ENCODE measurements at regions of chr14 and their contacts with region 1.

Region 1: GRCh38 chr14:34982417-34983147 is at the start of gene SRP54:
- DNase-seq: peak; percentile 99 to 100 (median 100)
- ATAC-seq: peak; percentile 93
- H3K4me3 ChIP-seq: peak within 1 kb of the TSS; percentile 82 to 87
- H3K4me3 Mint-ChIP-seq: no peak within 1 kb of the TSS
- H3K27ac ChIP-seq: peak within 1 kb of the TSS; percentile 92 to 96
- H3K27ac Mint-ChIP-seq: no peak within 1 kb of the TSS
- H3K4me1 ChIP-seq: peaks cover 34% of the 10 kb centered on the region
- H3K4me1 Mint-ChIP-seq: peaks cover 33% of the 10 kb centered on the region
- H3K27me3 ChIP-seq: no peaks in the 10 kb centered on the region
- H3K27me3 Mint-ChIP-seq: no peaks in the 10 kb centered on the region
- CTCF ChIP-seq: no peak
- total RNA-seq, gene SRP54: 40.4 to 42.4 TPM

Region 2: DNA sequence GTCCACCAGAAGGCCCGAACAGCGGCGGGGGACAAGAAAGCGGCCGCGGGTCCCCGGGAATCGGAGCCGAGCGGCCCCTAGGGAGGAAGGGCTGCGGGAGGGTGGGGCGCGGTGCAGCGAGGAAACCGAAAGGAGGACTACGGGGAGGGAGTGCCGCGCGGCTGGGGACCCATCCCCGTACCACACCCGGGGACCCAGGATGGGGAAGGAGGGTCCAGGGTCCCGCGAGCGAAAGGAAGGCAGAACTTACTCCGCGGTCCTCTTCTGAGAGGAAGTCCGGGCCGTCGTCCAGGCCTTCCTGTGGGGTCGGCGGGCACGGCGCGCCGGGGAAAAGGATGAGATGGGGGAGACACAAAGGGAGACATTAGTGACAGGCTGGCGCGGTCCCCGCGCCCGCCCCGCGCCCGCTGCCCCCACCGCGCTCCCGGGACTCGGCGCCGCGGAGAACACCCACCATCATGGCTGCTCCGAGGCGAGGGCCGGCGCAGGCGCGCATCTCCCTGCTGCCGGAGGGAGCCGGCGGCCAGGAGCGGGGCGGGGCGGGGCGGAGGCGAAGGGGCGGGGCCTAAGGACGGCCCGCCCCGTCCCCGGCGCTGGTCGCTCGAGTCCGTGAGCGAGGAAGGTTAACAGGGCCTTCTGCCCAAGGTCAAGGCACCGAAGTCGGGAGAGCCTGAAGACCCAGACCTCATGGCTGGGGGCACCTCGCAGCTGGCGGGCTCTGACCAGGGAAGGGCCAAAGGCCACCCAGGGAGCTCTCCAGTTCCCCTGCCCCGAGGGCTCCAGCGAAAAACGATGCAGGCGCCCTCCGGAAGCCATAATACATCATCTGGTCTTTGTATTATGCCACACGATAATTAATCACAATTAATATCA is 352.7 kb before region 1 on chr14 and contains the start of gene SNX6:
- CTCF ChIA-PET with region 1: no interaction called
- POLR2A ChIA-PET with region 1: no interaction called
- intact Hi-C with region 1: loop called (anchors 1 to 5 kb)
- DNase-seq: peak; percentile 70 to 92 (median 83)
- ATAC-seq: peak; percentile 96
- H3K4me3 ChIP-seq: peak within 1 kb of the TSS; percentile 95 to 100
- H3K4me3 Mint-ChIP-seq: peak within 1 kb of the TSS; percentile 94
- H3K27ac ChIP-seq: peak within 1 kb of the TSS; percentile 91 to 96
- H3K27ac Mint-ChIP-seq: peak within 1 kb of the TSS; percentile 93
- H3K4me1 ChIP-seq: peaks cover 20% of the 10 kb centered on the region
- H3K4me1 Mint-ChIP-seq: peaks cover 37% of the 10 kb centered on the region
- H3K27me3 ChIP-seq: no peaks in the 10 kb centered on the region
- H3K27me3 Mint-ChIP-seq: peaks cover 4% of the 10 kb centered on the region
- CTCF ChIP-seq: no peak
- total RNA-seq, gene SNX6: 51.2 to 53.5 TPM

Region 3: DNA sequence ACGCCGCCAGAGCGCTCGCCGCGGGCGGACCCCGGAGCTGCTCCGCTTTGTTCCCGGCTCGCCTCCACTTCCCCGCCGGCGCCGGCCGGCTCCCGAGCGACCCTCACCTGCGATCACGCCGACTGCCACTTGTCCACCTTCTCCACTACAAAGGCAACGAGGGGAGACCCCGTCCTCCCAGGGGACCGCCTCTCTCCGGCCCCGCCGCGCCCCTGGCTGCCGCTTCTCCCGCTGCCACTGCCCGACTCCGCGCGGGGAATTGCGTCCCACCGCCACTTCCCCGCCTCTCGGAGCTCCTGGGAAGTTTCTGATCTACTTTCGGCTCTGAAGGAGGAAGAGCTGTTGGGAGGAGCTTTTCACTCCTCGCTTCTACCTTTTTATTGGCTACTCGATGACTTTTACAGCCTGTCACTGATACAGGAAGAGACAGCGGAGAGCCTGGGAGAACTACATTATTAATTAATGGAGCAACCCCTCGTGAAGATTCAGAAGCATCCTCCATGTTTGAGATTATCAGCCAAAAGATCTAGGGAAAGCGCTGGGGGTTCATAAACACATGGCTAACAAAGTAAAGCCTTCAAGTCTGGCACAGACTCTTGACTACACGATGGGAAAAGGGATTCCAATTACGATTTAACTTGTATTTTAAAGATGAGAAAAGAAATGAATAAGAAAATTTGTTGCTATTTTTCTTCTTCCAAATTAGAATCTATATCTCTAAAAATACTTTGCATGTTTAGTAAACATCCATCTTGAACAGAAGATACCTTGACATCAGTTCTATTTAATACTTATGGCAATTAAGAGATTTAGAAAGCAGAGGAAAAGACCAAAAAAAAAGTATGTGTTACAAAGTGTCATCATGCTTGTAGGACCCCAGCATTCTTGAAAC is 107.3 kb before region 1 on chr14 and contains the start of gene BAZ1A:
- CTCF ChIA-PET with region 1: interaction called, 5 read pairs
- POLR2A ChIA-PET with region 1: interaction called, 73 read pairs
- intact Hi-C with region 1: loop called (anchors 1 kb)
- DNase-seq: peak in 8 of 9 experiments; percentile 4 to 79 (median 34)
- ATAC-seq: peak; percentile 11
- H3K4me3 ChIP-seq: peak within 1 kb of the TSS; percentile 59 to 95
- H3K4me3 Mint-ChIP-seq: peak within 1 kb of the TSS; percentile 100
- H3K27ac ChIP-seq: peak within 1 kb of the TSS; percentile 96 to 100
- H3K27ac Mint-ChIP-seq: peak within 1 kb of the TSS; percentile 99
- H3K4me1 ChIP-seq: peaks cover 14% of the 10 kb centered on the region
- H3K4me1 Mint-ChIP-seq: peaks cover 32% of the 10 kb centered on the region
- H3K27me3 ChIP-seq: no peaks in the 10 kb centered on the region
- H3K27me3 Mint-ChIP-seq: no peaks in the 10 kb centered on the region
- CTCF ChIP-seq: no peak
- total RNA-seq, gene BAZ1A: 48.8 to 52.7 TPM

Region 4: GRCh38 chr14:34994668-34995067 is 12.1 kb after region 1 on chr14:
- CTCF ChIA-PET with region 1: interaction called, 6 read pairs
- POLR2A ChIA-PET with region 1: interaction called, 11 read pairs
- intact Hi-C with region 1: no loop called
- DNase-seq: no peak
- ATAC-seq: no peak
- H3K4me3 ChIP-seq: no peak overlapping the region
- H3K4me3 Mint-ChIP-seq: no peak overlapping the region
- H3K27ac ChIP-seq: no peak overlapping the region
- H3K27ac Mint-ChIP-seq: peak overlapping the region; percentile 58
- H3K4me1 ChIP-seq: peaks cover 3% of the 10 kb centered on the region
- H3K4me1 Mint-ChIP-seq: peaks cover 33% of the 10 kb centered on the region
- H3K27me3 ChIP-seq: no peaks in the 10 kb centered on the region
- H3K27me3 Mint-ChIP-seq: no peaks in the 10 kb centered on the region
- CTCF ChIP-seq: no peak

Region 5: GRCh38 chr14:35292051-35292769 is 309.6 kb after region 1 on chr14 and contains the start of gene PSMA6:
- CTCF ChIA-PET with region 1: no interaction called
- POLR2A ChIA-PET with region 1: interaction called, 5 read pairs
- intact Hi-C with region 1: loop called (anchors 1 to 2 kb)
- DNase-seq: peak; percentile 98 to 100 (median 99)
- ATAC-seq: peak; percentile 97
- H3K4me3 ChIP-seq: peak within 1 kb of the TSS; percentile 79 to 85
- H3K4me3 Mint-ChIP-seq: peak within 1 kb of the TSS; percentile 98
- H3K27ac ChIP-seq: peak within 1 kb of the TSS; percentile 82 to 91
- H3K27ac Mint-ChIP-seq: peak within 1 kb of the TSS; percentile 98
- H3K4me1 ChIP-seq: peaks cover 31% of the 10 kb centered on the region
- H3K4me1 Mint-ChIP-seq: peaks cover 48% of the 10 kb centered on the region
- H3K27me3 ChIP-seq: no peaks in the 10 kb centered on the region
- H3K27me3 Mint-ChIP-seq: no peaks in the 10 kb centered on the region
- CTCF ChIP-seq: no peak
- total RNA-seq, gene PSMA6: 72.3 to 78.9 TPM

Region 6: GRCh38 chr14:36320200-36320896 is 1337.8 kb after region 1 on chr14 and contains the start of gene MBIP:
- CTCF ChIA-PET with region 1: no interaction called
- POLR2A ChIA-PET with region 1: no interaction called
- intact Hi-C with region 1: loop called in 1 of 2 experiments (anchors 5 kb)
- DNase-seq: peak; percentile 79 to 97 (median 89)
- ATAC-seq: peak; percentile 96
- H3K4me3 ChIP-seq: peak within 1 kb of the TSS; percentile 86 to 91
- H3K4me3 Mint-ChIP-seq: peak within 1 kb of the TSS; percentile 98
- H3K27ac ChIP-seq: peak within 1 kb of the TSS; percentile 63 to 74
- H3K27ac Mint-ChIP-seq: peak within 1 kb of the TSS; percentile 97
- H3K4me1 ChIP-seq: peaks cover 16% of the 10 kb centered on the region
- H3K4me1 Mint-ChIP-seq: peaks cover 41% of the 10 kb centered on the region
- H3K27me3 ChIP-seq: no peaks in the 10 kb centered on the region
- H3K27me3 Mint-ChIP-seq: peaks cover 5% of the 10 kb centered on the region
- CTCF ChIP-seq: no peak
- total RNA-seq, gene MBIP: 57.4 to 58.1 TPM